Activated naive CD4-positive, alpha-beta T cell treated with anti-CD3 and anti-CD28 coated beads for 36 hours (primary cell): ENCODE measurements at regions of chr7 and their contacts with region 1.

Region 1: DNA sequence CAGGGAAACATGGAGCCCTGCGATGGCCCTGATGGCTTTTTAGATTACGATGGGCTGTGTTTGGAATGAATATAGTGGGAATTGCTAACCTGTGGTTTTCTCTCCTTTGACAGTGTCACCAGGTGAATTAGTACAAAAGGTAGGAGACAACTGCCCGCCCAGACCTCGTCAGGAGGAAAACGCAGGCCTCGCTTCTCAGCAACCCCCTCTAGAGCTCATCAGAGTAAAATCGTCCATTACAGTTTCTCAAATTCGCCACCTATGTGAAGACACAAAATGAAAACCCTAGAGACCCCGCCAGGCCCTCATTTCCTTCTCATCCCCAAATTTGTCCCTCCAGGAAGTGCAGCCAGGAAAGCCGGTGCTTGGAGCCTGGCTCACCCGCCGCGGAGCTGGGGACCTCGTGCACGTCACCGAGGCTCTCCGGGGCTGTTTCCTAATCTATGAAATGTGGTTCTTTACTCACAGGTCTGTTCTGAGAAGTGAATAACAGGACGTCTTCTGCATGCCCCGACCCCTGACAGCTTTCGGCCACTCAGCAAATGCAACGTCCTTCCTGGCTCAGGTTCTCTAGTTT is 143.7 kb downstream of the VIPR2 start:
- DNase-seq: no peak
- H3K4me3 Mint-ChIP-seq: no peak overlapping the region
- H3K27ac Mint-ChIP-seq: no peak overlapping the region
- H3K4me1 Mint-ChIP-seq: peaks cover 23% of the 10 kb centered on the region
- H3K27me3 Mint-ChIP-seq: peaks cover 9% of the 10 kb centered on the region

Region 2: GRCh38 chr7:158655931-158656441 is 345.0 kb before region 1 on chr7:
- CTCF ChIA-PET with region 1: no interaction called
- intact Hi-C with region 1: loop called (anchors 1 kb)
- DNase-seq: peak; percentile 90
- H3K4me3 Mint-ChIP-seq: no peak overlapping the region
- H3K27ac Mint-ChIP-seq: peak overlapping the region; percentile 84
- H3K4me1 Mint-ChIP-seq: peaks cover 21% of the 10 kb centered on the region
- H3K27me3 Mint-ChIP-seq: no peaks in the 10 kb centered on the region

Region 3: GRCh38 chr7:159015454-159016410 is 14.8 kb after region 1 on chr7:
- CTCF ChIA-PET with region 1: interaction called, 3 read pairs
- intact Hi-C with region 1: loop called (anchors 1 kb)
- DNase-seq: no peak
- H3K4me3 Mint-ChIP-seq: no peak overlapping the region
- H3K27ac Mint-ChIP-seq: no peak overlapping the region
- H3K4me1 Mint-ChIP-seq: peaks cover 26% of the 10 kb centered on the region
- H3K27me3 Mint-ChIP-seq: peaks cover 6% of the 10 kb centered on the region

Region 4: DNA sequence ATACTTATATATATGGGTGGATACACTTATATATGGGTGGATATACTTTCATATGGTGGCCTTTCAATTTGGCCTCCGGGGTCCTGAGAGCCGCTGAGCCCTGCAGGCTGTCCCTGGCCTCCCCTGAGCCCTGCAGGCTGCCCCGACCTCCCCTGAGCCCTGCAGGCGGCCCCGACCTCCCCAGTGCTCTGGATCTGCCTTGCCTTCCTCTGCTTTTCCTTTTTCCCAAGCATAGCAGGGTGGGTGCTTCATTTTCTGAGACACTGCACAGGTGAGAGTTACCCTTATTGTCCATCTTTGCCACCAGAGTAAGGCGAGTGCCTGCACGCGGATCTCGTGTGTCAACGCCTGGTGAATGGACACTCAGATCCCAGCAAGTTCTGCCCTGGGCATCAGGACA is 37.1 kb after region 1 on chr7:
- CTCF ChIA-PET with region 1: no interaction called
- intact Hi-C with region 1: loop called (anchors 2 kb)
- DNase-seq: no peak
- H3K4me3 Mint-ChIP-seq: no peak overlapping the region
- H3K27ac Mint-ChIP-seq: no peak overlapping the region
- H3K4me1 Mint-ChIP-seq: peaks cover 6% of the 10 kb centered on the region
- H3K27me3 Mint-ChIP-seq: peaks cover 4% of the 10 kb centered on the region

Region 5: DNA sequence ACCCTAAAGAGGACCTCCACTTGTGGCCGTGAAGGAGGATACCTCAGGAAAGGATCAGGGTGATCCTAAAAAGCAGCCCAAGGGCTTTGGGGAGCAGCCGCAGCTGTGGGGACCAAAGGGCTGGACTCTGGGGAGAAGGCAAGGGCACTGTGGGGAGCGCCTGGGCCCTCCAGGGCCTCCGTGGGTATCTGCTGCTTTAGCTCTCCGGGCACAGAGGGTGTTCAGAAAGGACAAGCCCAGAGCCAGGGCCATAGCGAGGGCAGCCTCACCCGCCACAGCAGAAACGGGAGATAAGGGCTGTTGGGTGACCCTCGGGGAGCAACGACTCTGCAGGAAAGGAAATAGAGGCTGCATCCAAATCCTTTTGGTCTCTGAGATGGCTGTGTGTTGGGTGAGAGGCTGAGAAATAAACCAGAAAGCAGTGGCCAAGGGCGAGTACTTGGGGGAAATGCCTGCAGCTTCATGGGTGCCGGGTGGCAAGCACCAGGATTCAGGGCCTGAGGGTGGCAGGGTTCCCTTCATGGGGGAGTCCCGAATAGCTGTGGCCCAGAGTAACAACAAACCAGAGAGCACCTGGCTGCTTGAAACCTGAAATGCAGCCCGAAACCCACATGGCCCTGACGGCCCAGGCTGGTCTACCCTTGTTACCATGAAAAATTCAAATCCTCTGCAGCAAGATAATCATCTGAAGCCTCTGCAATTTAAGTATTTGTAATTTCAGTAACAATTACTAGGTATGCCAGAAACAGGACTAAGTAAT is 48.5 kb after region 1 on chr7:
- CTCF ChIA-PET with region 1: no interaction called
- intact Hi-C with region 1: loop called (anchors 1 kb)
- DNase-seq: no peak
- H3K4me3 Mint-ChIP-seq: no peak overlapping the region
- H3K27ac Mint-ChIP-seq: no peak overlapping the region
- H3K4me1 Mint-ChIP-seq: peaks cover 15% of the 10 kb centered on the region
- H3K27me3 Mint-ChIP-seq: no peaks in the 10 kb centered on the region

Region 6: DNA sequence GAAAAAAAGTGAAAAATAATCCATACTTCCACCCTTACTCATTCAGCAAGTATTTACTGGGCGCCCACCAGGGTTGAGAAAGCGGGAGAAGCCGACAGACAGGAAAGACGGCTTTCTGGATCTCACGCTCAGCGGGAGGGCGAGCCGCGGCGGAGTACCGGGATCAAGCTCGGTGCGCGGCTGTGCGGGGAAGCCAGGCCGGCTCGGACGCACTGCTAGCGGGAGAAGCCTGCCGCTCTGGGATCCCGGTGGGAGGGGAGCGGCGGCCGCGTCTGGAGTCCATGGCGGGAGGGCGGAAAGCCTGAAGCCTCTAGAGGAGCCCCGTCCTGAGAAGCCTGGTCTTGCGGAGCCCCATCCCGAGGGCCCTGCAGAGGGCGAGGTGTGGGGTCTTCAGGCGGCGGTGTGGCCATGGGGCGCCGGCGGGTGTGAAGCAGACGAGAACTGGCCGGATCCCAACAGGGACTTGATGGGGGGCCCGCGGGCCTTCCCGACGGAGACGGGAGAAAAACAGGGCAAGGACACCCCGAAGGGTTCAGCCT is 60.8 kb after region 1 on chr7:
- CTCF ChIA-PET with region 1: no interaction called
- intact Hi-C with region 1: no loop called
- DNase-seq: no peak
- H3K4me3 Mint-ChIP-seq: no peak overlapping the region
- H3K27ac Mint-ChIP-seq: no peak overlapping the region
- H3K4me1 Mint-ChIP-seq: no peaks in the 10 kb centered on the region
- H3K27me3 Mint-ChIP-seq: peaks cover 5% of the 10 kb centered on the region

Region 7: GRCh38 chr7:159143780-159144757 is 143.1 kb after region 1 on chr7:
- CTCF ChIA-PET with region 1: no interaction called
- intact Hi-C with region 1: loop called (anchors 5 kb)
- DNase-seq: peak; percentile 78
- H3K4me3 Mint-ChIP-seq: peak overlapping the region; percentile 72
- H3K27ac Mint-ChIP-seq: no peak overlapping the region
- H3K4me1 Mint-ChIP-seq: peaks cover 4% of the 10 kb centered on the region
- H3K27me3 Mint-ChIP-seq: peaks cover 46% of the 10 kb centered on the region

Region 8: GRCh38 chr7:159197066-159197975 is 196.4 kb after region 1 on chr7:
- CTCF ChIA-PET with region 1: no interaction called
- intact Hi-C with region 1: loop called (anchors 1 kb)
- DNase-seq: peak; percentile 70
- H3K4me3 Mint-ChIP-seq: peak overlapping the region; percentile 64
- H3K27ac Mint-ChIP-seq: peak overlapping the region; percentile 87
- H3K4me1 Mint-ChIP-seq: peaks cover 28% of the 10 kb centered on the region
- H3K27me3 Mint-ChIP-seq: no peaks in the 10 kb centered on the region